AG04449 (cell line): ENCODE measurements at regions of chr13 and their contacts with region 1.

Region 1: DNA sequence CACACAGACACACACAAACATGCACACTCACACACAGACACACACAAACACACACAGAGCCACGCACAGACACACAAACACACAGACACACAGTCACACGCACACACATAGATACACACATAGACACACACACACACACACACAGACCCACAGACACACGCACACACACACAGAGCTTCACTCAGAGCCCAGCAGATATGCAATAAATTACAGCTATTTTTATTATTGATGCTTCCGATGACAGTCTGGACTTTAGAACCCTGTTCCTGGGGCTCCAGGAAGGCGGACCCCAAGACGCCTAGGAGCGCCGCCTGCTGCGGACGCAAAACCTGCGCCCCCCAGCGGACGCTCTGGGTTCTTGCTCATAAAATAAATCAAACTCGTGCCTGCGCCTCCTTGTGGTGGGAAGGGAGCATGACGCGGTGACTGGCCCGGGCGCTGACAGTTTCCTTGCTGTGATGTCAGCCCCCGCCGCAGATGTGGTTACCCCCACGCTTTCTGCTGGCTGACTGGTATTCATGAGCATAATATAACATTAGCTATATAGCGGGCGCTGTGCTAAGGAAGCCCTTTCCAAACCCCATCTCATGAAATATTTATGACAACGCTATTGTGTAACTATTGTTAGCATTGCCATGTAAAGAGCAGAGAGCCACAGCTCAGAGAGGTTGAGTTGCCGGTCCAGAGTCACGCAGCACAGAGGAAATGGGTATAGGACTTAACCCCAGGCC is 64.4 kb upstream of the TM9SF2 start:
- DNase-seq: peak; percentile 26
- H3K4me3 ChIP-seq: peak overlapping the region; percentile 36
- CTCF ChIP-seq: peak; percentile 99

Region 2: GRCh38 chr13:99200432-99201167 is 236.3 kb before region 1 on chr13 and contains the start of gene UBAC2:
- CTCF ChIA-PET with region 1: interaction called, 13 read pairs
- POLR2A ChIA-PET with region 1: no interaction called
- DNase-seq: peak; percentile 45
- H3K4me3 ChIP-seq: peak within 1 kb of the TSS; percentile 98
- CTCF ChIP-seq: no peak

Region 3: GRCh38 chr13:99307648-99308339 is 129.1 kb before region 1 on chr13:
- CTCF ChIA-PET with region 1: interaction called, 93 read pairs
- POLR2A ChIA-PET with region 1: no interaction called
- DNase-seq: peak; percentile 53
- H3K4me3 ChIP-seq: no peak overlapping the region; the same call in 1 of the 2 replicates
- CTCF ChIP-seq: no peak

Region 4: GRCh38 chr13:99380921-99381645 is 55.8 kb before region 1 on chr13:
- CTCF ChIA-PET with region 1: interaction called, 14 read pairs
- POLR2A ChIA-PET with region 1: no interaction called
- DNase-seq: no peak
- H3K4me3 ChIP-seq: no peak overlapping the region
- CTCF ChIP-seq: no peak

Region 5: GRCh38 chr13:99425485-99426341 is 11.1 kb before region 1 on chr13:
- CTCF ChIA-PET with region 1: interaction called, 60 read pairs
- POLR2A ChIA-PET with region 1: no interaction called
- DNase-seq: no peak
- H3K4me3 ChIP-seq: no peak overlapping the region
- CTCF ChIP-seq: no peak

Region 6: GRCh38 chr13:99501184-99501847 is 64.5 kb after region 1 on chr13 and contains the start of gene TM9SF2:
- CTCF ChIA-PET with region 1: interaction called, 116 read pairs
- POLR2A ChIA-PET with region 1: no interaction called
- DNase-seq: peak; percentile 77
- H3K4me3 ChIP-seq: peak within 1 kb of the TSS; percentile 92
- CTCF ChIP-seq: no peak

Region 7: DNA sequence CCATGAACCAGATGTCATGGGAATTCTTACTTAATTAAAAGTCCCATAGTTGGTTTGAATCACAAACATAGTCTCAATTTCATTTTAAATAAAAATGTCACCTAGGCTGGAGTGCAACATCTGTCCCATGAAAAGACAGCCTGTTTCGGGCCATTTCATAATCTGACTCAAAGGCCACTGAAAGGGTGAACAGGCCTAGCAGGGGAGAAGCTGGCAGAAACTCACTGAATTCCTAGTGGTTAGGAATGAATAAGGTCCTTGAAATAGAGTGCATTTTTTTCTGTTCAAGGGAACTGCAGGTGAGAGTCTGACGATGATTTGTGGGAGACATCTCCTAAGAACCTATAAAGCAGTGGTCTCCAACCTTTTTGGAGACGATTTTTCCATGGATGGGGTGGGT is 608.1 kb after region 1 on chr13:
- CTCF ChIA-PET with region 1: no interaction called
- POLR2A ChIA-PET with region 1: no interaction called
- DNase-seq: no peak
- H3K4me3 ChIP-seq: no peak overlapping the region
- CTCF ChIP-seq: no peak